B cell (primary cell): ENCODE measurements at regions of chr15 and their contacts with region 1.

Region 1: GRCh38 chr15:56918046-56918938 is at the start of gene TCF12:
- DNase-seq: peak; percentile 97
- ATAC-seq: peak; percentile 74
- H3K4me3 ChIP-seq: peak within 1 kb of the TSS; percentile 80 to 92 (median 89)
- H3K4me3 Mint-ChIP-seq: peak within 1 kb of the TSS; percentile 93
- H3K27ac ChIP-seq: peak within 1 kb of the TSS; percentile 79 to 86
- H3K27ac Mint-ChIP-seq: peak within 1 kb of the TSS; percentile 92
- H3K4me1 ChIP-seq: peaks cover 19 to 21% of the 10 kb centered on the region in 2 donors
- H3K4me1 Mint-ChIP-seq: peaks cover 32% of the 10 kb centered on the region
- H3K27me3 ChIP-seq: no peaks in the 10 kb centered on the region
- H3K27me3 Mint-ChIP-seq: no peaks in the 10 kb centered on the region
- CTCF ChIP-seq: peak; percentile 59
- total RNA-seq, gene TCF12: 131 TPM in 2 replicates

Region 2: DNA sequence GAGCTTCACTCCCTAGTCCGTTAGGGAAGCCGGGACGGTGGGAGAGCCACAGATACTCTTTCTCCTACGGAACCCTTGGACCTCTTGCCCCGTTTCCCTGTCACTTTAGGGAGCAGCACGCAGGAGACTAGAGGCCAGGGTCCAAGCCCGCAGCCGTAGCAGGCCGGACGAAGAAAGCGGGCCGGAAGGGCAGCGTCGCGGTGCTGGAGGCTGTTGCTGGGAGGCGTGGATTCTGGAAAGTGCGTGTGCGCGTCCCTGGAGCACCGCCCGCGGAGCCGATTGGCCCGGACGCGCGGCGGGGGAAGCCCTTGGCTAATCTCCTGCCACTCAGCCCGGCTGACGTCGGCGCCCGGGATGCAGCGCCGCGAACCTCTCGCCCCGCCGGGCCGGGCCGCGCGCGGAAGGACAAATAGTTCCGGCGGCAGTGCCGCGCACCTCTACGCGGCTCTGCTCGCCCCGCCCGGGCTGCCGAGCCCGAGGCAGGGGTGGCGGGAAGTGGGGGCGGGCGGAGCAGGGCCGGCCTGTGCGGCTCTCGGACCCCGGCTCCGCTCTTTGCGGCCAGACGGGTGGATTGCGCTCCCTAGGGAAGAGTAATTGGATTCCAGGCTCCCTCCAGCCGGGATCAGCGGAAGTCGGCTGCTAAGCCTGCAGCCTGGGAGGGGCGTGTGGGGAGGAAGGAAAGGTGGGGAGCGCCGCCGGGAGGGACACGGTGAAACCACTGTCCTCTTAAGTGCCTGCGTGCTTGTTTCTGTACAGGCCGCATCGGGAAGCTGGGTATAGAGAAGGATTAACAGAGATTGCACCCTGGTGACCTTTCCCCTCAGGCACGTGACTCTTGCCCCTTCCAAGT is 31.1 kb before region 1 on chr15:
- CTCF ChIA-PET with region 1: interaction called, 15 read pairs
- POLR2A ChIA-PET with region 1: interaction called, 31 read pairs
- intact Hi-C with region 1: loop called (anchors 1 kb)
- DNase-seq: peak; percentile 91
- ATAC-seq: peak; percentile 80
- H3K4me3 ChIP-seq: peak overlapping the region; percentile 78 to 85 (median 78)
- H3K4me3 Mint-ChIP-seq: peak overlapping the region; percentile 92
- H3K27ac ChIP-seq: peak overlapping the region; percentile 85 to 95
- H3K27ac Mint-ChIP-seq: peak overlapping the region; percentile 95
- H3K4me1 ChIP-seq: peaks cover 24 to 27% of the 10 kb centered on the region in 2 donors
- H3K4me1 Mint-ChIP-seq: peaks cover 35% of the 10 kb centered on the region
- H3K27me3 ChIP-seq: no peaks in the 10 kb centered on the region
- H3K27me3 Mint-ChIP-seq: no peaks in the 10 kb centered on the region
- CTCF ChIP-seq: no peak

Region 3: DNA sequence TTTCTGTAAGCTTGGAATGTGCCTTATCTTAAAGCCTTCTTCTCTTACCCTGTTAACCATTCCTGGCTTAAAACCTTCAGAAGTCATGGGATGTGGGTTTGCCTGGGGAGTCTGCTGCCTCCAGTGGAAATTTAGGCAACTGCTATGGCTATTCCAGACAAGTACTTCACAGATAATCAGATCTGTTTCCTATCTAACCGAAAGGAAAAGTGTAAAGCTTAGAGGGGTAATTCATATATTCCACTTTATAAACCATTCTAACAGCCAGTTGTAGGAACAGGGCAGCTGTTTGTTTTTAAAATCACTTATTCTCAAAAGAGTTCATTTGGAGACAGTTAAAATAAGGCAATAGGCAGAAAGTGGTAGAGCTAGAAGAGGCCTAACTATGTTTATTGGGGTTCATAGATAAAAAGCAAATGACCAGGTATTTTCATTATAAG is 220.1 kb after region 1 on chr15:
- CTCF ChIA-PET with region 1: no interaction called
- POLR2A ChIA-PET with region 1: no interaction called
- intact Hi-C with region 1: loop called (anchors 10 kb)
- DNase-seq: peak; percentile 32
- ATAC-seq: no peak
- H3K4me3 ChIP-seq: no peak overlapping the region
- H3K4me3 Mint-ChIP-seq: no peak overlapping the region
- H3K27ac ChIP-seq: no peak overlapping the region
- H3K27ac Mint-ChIP-seq: no peak overlapping the region
- H3K4me1 ChIP-seq: peaks cover 1 to 10% of the 10 kb centered on the region in 2 donors
- H3K4me1 Mint-ChIP-seq: peaks cover 25% of the 10 kb centered on the region
- H3K27me3 ChIP-seq: no peaks in the 10 kb centered on the region
- H3K27me3 Mint-ChIP-seq: no peaks in the 10 kb centered on the region
- CTCF ChIP-seq: peak; percentile 65